Cardiac septum (tissue), 1 donor: ENCODE measurements at regions of chr3 and their contacts with region 1.

Region 1: GRCh38 chr3:64345371-64345770 is 120.1 kb upstream of the PRICKLE2 start:
- DNase-seq: no peak

Region 2: DNA sequence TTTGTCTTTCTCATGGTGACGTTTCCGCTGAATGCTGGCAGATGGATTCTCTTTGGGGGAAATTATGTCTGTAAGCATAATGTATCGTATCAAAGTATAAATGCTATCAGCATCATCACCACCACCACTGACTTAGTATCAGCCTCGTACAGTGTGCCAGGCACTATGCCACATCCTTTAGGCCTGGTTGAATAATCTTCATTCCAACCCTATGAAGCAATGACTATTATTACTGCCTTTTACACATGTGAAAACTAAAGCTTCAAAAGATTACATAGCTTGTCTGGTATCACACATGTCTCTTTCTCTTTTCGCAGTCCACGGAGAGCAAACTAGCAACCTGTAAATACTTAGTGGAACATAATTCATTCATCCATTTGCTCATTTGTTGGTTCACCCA is 46.6 kb after region 1 on chr3:
- intact Hi-C with region 1: loop called (anchors 5 kb)
- DNase-seq: no peak